Endothelial cell of umbilical vein (primary cell): ENCODE measurements at regions of chr3 and their contacts with region 1.

Region 1: GRCh38 chr3:5026331-5027218 is 47.3 kb downstream of the BHLHE40 start:
- DNase-seq: peak; percentile 93
- H3K4me3 ChIP-seq: peak overlapping the region in 2 of 3 experiments; percentile 29 to 48
- H3K27ac ChIP-seq: peak overlapping the region; percentile 97
- H3K4me1 ChIP-seq: peaks cover 29% of the 10 kb centered on the region
- H3K27me3 ChIP-seq: no peaks in the 10 kb centered on the region
- CTCF ChIP-seq: peak; percentile 62 to 85
- POLR2A ChIP-seq: no peak

Region 2: GRCh38 chr3:4656059-4656458 is 370.5 kb before region 1 on chr3:
- CTCF ChIA-PET with region 1: interaction called, 7 read pairs
- POLR2A ChIA-PET with region 1: no interaction called
- dilution Hi-C with region 1: no loop called
- intact Hi-C with region 1: loop called (anchors 1 kb)
- DNase-seq: peak; percentile 81
- H3K4me3 ChIP-seq: no peak overlapping the region
- H3K27ac ChIP-seq: peak overlapping the region; percentile 48
- H3K4me1 ChIP-seq: peaks cover 11% of the 10 kb centered on the region
- H3K27me3 ChIP-seq: no peaks in the 10 kb centered on the region
- CTCF ChIP-seq: peak; percentile 91 to 92
- POLR2A ChIP-seq: no peak

Region 3: DNA sequence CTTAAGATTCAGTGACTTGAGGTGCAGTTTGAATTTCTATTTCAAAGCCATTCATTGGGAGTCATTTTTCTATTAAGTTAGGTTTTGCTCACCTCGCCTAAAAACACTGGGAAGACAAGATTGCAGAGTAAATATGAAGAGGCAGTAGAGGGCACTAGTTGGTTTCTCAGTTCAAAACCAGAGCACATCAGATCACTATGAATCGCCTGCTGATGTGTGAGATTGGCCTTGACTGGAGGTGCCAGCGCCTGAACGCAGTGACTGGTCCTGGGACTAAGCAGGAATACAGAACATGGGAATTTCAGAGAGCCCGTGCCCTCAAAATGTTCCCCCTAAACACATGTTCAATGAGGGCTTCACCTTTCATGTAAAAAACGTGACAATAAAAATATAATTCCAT is 304.5 kb before region 1 on chr3:
- CTCF ChIA-PET with region 1: interaction called, 121 read pairs
- POLR2A ChIA-PET with region 1: interaction called, 3 read pairs
- dilution Hi-C with region 1: no loop called
- intact Hi-C with region 1: loop called (anchors 1 kb)
- DNase-seq: peak; percentile 81
- H3K4me3 ChIP-seq: no peak overlapping the region
- H3K27ac ChIP-seq: peak overlapping the region; percentile 1
- H3K4me1 ChIP-seq: no peaks in the 10 kb centered on the region
- H3K27me3 ChIP-seq: no peaks in the 10 kb centered on the region
- CTCF ChIP-seq: peak; percentile 40 to 57
- POLR2A ChIP-seq: no peak

Region 4: GRCh38 chr3:4771243-4771642 is 255.3 kb before region 1 on chr3:
- CTCF ChIA-PET with region 1: no interaction called
- POLR2A ChIA-PET with region 1: no interaction called
- dilution Hi-C with region 1: no loop called
- intact Hi-C with region 1: no loop called
- DNase-seq: no peak
- H3K4me3 ChIP-seq: no peak overlapping the region
- H3K27ac ChIP-seq: no peak overlapping the region
- H3K4me1 ChIP-seq: peaks cover 4% of the 10 kb centered on the region
- H3K27me3 ChIP-seq: no peaks in the 10 kb centered on the region
- CTCF ChIP-seq: no peak
- POLR2A ChIP-seq: no peak

Region 5: GRCh38 chr3:4814305-4814903 is 212.2 kb before region 1 on chr3:
- CTCF ChIA-PET with region 1: interaction called, 3 read pairs
- POLR2A ChIA-PET with region 1: no interaction called
- dilution Hi-C with region 1: no loop called
- intact Hi-C with region 1: loop called (anchors 1 kb)
- DNase-seq: peak; percentile 85
- H3K4me3 ChIP-seq: no peak overlapping the region
- H3K27ac ChIP-seq: peak overlapping the region; percentile 74
- H3K4me1 ChIP-seq: peaks cover 18% of the 10 kb centered on the region
- H3K27me3 ChIP-seq: no peaks in the 10 kb centered on the region
- CTCF ChIP-seq: no peak
- POLR2A ChIP-seq: no peak

Region 6: GRCh38 chr3:4850928-4851265 is 175.7 kb before region 1 on chr3:
- CTCF ChIA-PET with region 1: interaction called, 7 read pairs
- POLR2A ChIA-PET with region 1: no interaction called
- dilution Hi-C with region 1: no loop called
- intact Hi-C with region 1: loop called (anchors 1 kb)
- DNase-seq: no peak
- H3K4me3 ChIP-seq: no peak overlapping the region
- H3K27ac ChIP-seq: no peak overlapping the region
- H3K4me1 ChIP-seq: peaks cover 32% of the 10 kb centered on the region
- H3K27me3 ChIP-seq: no peaks in the 10 kb centered on the region
- CTCF ChIP-seq: no peak
- POLR2A ChIP-seq: no peak

Region 7: GRCh38 chr3:5016218-5017161 is 10.1 kb before region 1 on chr3:
- CTCF ChIA-PET with region 1: interaction called, 8 read pairs
- POLR2A ChIA-PET with region 1: no interaction called
- dilution Hi-C with region 1: no loop called
- intact Hi-C with region 1: loop called (anchors 1 kb)
- DNase-seq: peak; percentile 85
- H3K4me3 ChIP-seq: no peak overlapping the region
- H3K27ac ChIP-seq: peak overlapping the region; percentile 86
- H3K4me1 ChIP-seq: peaks cover 35% of the 10 kb centered on the region
- H3K27me3 ChIP-seq: no peaks in the 10 kb centered on the region
- CTCF ChIP-seq: no peak
- POLR2A ChIP-seq: peak; percentile 34

Region 8: GRCh38 chr3:5122030-5122740 is 95.6 kb after region 1 on chr3 and contains the start of gene ARL8B:
- CTCF ChIA-PET with region 1: no interaction called
- POLR2A ChIA-PET with region 1: interaction called, 3 read pairs
- dilution Hi-C with region 1: no loop called
- intact Hi-C with region 1: loop called (anchors 5 kb)
- DNase-seq: peak; percentile 87
- H3K4me3 ChIP-seq: peak within 1 kb of the TSS; percentile 61 to 95 (median 79)
- H3K27ac ChIP-seq: peak within 1 kb of the TSS; percentile 75
- H3K4me1 ChIP-seq: peaks cover 10% of the 10 kb centered on the region
- H3K27me3 ChIP-seq: no peaks in the 10 kb centered on the region
- CTCF ChIP-seq: peak; percentile 93 to 99
- POLR2A ChIP-seq: peak; percentile 80
- total RNA-seq, gene ARL8B: 58.0 and 58.2 TPM in 2 replicates

Region 9: DNA sequence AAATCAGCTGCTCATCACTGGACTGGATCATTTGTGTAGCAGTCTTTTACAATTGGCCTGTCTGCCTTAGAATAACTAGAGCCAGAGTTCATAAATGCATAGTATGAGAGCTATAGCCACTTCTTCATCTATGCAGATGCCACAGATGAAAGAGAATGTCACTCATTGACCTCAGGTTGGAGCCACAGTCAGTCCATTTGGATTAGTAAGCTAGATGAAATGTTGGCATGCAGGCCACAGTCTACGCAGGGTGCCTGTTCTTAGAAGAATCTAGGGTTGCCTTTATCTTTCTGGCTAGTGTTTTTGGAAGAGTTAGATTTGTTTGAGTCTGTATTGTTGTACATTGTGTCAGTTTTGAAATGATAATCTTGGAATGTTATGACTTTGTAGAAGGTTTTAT is 135.5 kb after region 1 on chr3:
- CTCF ChIA-PET with region 1: no interaction called
- POLR2A ChIA-PET with region 1: no interaction called
- dilution Hi-C with region 1: no loop called
- intact Hi-C with region 1: no loop called
- DNase-seq: no peak
- H3K4me3 ChIP-seq: no peak overlapping the region
- H3K27ac ChIP-seq: no peak overlapping the region
- H3K4me1 ChIP-seq: peaks cover 9% of the 10 kb centered on the region
- H3K27me3 ChIP-seq: no peaks in the 10 kb centered on the region
- CTCF ChIP-seq: no peak
- POLR2A ChIP-seq: no peak

Region 10: DNA sequence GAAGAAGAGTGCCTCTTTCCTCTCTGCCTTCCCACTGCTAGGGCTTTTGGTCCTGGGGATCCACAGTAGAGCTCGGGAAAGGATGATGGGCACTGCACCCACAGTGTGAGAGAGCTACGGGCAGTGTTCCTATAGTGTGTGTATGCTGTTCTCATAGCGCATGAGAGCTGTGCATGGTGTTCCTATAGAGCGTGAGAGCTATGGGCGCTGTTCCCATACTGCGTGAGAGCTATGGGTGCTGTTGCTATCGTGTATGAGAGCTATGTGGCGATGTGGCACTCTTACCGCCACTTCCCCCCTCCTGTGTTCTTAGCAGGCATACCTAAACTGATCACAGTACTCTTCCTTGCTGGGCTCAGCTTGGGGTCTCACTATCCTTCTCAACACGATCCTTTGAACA is 374.4 kb after region 1 on chr3:
- CTCF ChIA-PET with region 1: no interaction called
- POLR2A ChIA-PET with region 1: no interaction called
- dilution Hi-C with region 1: no loop called
- intact Hi-C with region 1: no loop called
- DNase-seq: no peak
- H3K4me3 ChIP-seq: no peak overlapping the region
- H3K27ac ChIP-seq: no peak overlapping the region
- H3K4me1 ChIP-seq: no peaks in the 10 kb centered on the region
- H3K27me3 ChIP-seq: no peaks in the 10 kb centered on the region
- CTCF ChIP-seq: no peak
- POLR2A ChIP-seq: no peak